ENCODE measurements at regions of chr3 and their contacts with region 1.

Region 1: GRCh38 chr3:156172536-156172935 is 52.2 kb downstream of the KCNAB1 start:
- DNase-seq: no peak
- H3K27ac ChIP-seq: no peak overlapping the region
- CTCF ChIP-seq: no peak

Region 2: GRCh38 chr3:155313300-155313699 is 859.2 kb before region 1 on chr3:
- CTCF ChIA-PET with region 1: no interaction called
- POLR2A ChIA-PET with region 1: no interaction called
- DNase-seq: no peak
- H3K27ac ChIP-seq: no peak overlapping the region
- CTCF ChIP-seq: no peak

Region 3: DNA sequence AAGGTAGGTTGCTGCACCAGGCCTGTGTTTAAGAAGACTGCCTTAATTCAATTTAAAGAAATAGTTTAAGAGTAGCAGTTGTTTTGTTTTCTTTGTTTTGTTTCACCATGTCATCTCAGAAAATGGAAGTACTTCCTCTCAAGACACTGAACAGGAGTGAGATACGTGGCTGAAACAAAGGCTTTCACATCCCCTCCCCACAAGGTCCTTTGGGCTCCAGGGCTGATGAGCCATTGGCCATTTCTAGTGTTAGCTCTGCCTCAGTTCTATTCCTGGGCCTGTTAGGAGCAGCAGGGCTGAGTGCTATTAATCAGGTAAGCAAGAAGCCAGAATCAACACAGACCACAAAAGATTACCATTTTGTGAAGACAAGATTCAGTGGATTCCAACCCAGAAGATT is 80.6 kb after region 1 on chr3:
- CTCF ChIA-PET with region 1: interaction called, 10 read pairs
- POLR2A ChIA-PET with region 1: no interaction called
- DNase-seq: no peak
- H3K27ac ChIP-seq: no peak overlapping the region
- CTCF ChIP-seq: no peak